ENCODE measurements at regions of chr17 and their contacts with region 1.

Region 1: DNA sequence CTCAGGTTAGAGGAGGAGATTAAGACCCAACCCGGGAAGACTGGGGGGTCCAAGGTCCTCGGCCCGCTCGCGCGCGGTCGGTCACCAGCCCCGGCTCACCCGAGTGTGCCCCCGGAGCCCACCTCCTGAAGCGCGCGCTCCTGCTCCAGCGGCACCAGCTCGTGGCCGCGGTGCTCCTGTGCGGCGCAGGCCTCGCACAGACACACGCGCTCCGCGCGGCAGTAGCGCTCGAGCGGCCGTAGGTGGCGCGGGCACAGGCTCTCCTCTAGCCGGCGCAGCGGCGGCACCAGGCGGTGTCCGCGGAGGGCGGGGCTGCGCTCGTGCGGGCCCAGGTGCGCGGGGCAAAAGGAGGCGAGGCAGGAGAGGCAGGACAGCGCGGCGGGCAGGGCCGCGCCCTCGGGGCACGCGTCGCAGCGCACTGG is 618 bp downstream of the TRIM47 start:
- DNase-seq: peak; percentile 87
- ATAC-seq: peak; percentile 72
- H3K4me3 Mint-ChIP-seq: peak overlapping the region; percentile 91
- H3K27ac Mint-ChIP-seq: peak overlapping the region; percentile 94
- H3K4me1 Mint-ChIP-seq: peaks cover 26% of the 10 kb centered on the region
- H3K27me3 Mint-ChIP-seq: peaks cover 2% of the 10 kb centered on the region

Region 2: DNA sequence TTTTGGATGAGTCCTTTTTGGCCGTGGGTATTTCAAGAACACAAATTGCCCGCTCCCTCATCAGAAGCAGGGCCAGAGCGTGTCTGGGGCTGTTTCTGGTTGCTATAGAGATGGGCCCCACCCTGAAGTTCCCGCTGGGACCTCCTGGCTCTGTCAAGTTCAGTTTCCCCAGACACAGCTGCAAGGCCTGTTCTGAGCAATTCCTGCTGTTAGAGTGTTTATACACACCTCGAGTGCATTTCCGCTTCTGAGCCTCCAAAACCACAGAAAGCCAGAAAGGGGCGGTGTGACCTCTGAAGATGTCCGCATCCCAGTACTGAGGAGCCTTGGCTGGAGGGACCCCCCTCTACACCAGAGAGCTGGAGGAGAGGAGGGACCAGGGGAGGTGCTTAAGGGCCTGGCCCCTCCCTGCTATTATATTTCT is 13.3 kb before region 1 on chr17:
- CTCF ChIA-PET with region 1: interaction called, 20 read pairs
- POLR2A ChIA-PET with region 1: interaction called, 8 read pairs
- intact Hi-C with region 1: no loop called
- DNase-seq: peak; percentile 74
- ATAC-seq: peak; percentile 77
- H3K4me3 Mint-ChIP-seq: no peak overlapping the region
- H3K27ac Mint-ChIP-seq: peak overlapping the region; percentile 87
- H3K4me1 Mint-ChIP-seq: peaks cover 20% of the 10 kb centered on the region
- H3K27me3 Mint-ChIP-seq: no peaks in the 10 kb centered on the region

Region 3: GRCh38 chr17:75896415-75897159 is 18.8 kb after region 1 on chr17 and contains the start of gene TRIM65:
- CTCF ChIA-PET with region 1: interaction called, 13 read pairs
- POLR2A ChIA-PET with region 1: interaction called, 4 read pairs
- intact Hi-C with region 1: loop called (anchors 1 to 2 kb)
- DNase-seq: peak; percentile 86
- ATAC-seq: peak; percentile 85
- H3K4me3 Mint-ChIP-seq: peak within 1 kb of the TSS; percentile 84
- H3K27ac Mint-ChIP-seq: peak within 1 kb of the TSS; percentile 72
- H3K4me1 Mint-ChIP-seq: peaks cover 19% of the 10 kb centered on the region
- H3K27me3 Mint-ChIP-seq: no peaks in the 10 kb centered on the region
- total RNA-seq, gene TRIM65: 28.9 to 31.9 TPM

Measured in activated CD4-positive, alpha-beta T cell treated with anti-CD3 and anti-CD28 coated beads for 36 hours (primary cell).